ENCODE measurements at regions of chr10 and their contacts with region 1.

Region 1: DNA sequence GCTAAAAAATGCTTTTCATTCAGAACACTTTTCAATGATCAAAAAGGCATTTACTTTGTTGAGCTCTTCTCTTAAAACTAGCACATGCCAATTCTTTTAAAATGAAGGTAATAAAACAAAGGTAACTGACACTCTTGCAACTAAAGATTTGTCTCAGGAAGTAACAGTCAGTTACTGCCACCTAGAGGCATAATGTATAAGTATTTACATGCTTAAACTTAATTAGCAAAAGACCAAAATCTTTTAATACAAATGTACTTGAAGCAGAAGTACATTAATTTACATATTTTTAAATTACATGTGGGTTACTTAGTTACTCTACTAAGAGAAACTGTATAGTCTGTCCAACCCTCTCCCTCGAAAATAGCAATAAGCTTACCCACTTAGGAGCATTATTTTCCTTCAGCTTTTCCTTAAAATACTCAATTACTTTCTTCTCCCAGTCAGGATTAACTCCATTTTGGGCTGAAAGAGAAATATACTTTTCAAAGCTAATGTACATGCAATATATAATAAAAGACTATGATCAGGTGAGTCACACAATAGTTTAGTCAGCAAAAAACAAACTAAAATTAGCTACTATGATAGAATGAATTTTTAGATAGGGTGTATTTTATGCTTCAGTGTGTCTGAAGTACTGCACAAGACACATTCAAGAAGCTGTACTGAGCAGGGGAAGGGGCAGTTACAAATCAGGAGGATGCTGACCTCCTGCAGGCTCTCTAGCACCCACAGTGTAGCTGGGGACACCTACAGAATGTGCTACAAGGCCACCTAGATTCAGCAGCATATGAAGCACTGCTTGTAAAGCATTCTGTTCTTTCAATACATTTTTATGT is 13.0 kb downstream of the MCMBP start:
- H3K4me3 Mint-ChIP-seq: no peak overlapping the region
- H3K27ac Mint-ChIP-seq: no peak overlapping the region
- H3K4me1 Mint-ChIP-seq: peaks cover 21% of the 10 kb centered on the region
- H3K27me3 Mint-ChIP-seq: no peaks in the 10 kb centered on the region

Region 2: GRCh38 chr10:119908166-119908565 is 48.5 kb after region 1 on chr10:
- intact Hi-C with region 1: loop called (anchors 10 kb)
- H3K4me3 Mint-ChIP-seq: no peak overlapping the region
- H3K27ac Mint-ChIP-seq: no peak overlapping the region
- H3K4me1 Mint-ChIP-seq: no peaks in the 10 kb centered on the region
- H3K27me3 Mint-ChIP-seq: no peaks in the 10 kb centered on the region

Measured in dendritic cell treated with granulocyte-macrophage colony-stimulating factor and Interleukin-4, amounts not matched to agents 40 ng/mL and 50 ng/mL, for 4 days (primary cell).